Activated CD4-positive, alpha-beta T cell treated with anti-CD3 and anti-CD28 coated beads for 36 hours (primary cell): ENCODE measurements at regions of chr3 and their contacts with region 1.

Region 1: DNA sequence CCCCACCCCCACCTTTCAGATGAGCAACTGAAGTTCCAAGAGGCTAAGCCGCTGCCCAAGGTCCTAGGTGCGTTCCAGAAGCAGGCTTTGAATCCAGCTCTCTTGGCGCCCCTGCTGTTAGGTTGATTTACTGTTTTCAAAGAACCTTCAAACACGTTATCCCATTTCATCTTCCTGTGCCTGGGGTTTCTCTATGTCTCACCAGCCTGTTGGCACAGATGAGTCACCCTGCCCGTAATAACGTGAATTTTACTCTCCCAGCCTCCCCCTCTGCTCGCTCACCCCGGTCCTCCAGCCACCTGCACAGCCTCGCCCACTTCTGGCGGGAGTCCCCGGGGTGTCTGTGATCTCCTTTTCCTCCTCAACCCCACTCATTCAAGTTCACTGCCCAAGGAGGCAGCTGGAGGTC is 13.0 kb upstream of the TSEN2 start:
- DNase-seq: peak; percentile 91
- ATAC-seq: peak; percentile 96
- H3K4me3 Mint-ChIP-seq: peak overlapping the region; percentile 12
- H3K27ac Mint-ChIP-seq: peak overlapping the region; percentile 81
- H3K4me1 Mint-ChIP-seq: peaks cover 36% of the 10 kb centered on the region
- H3K27me3 Mint-ChIP-seq: no peaks in the 10 kb centered on the region

Region 2: GRCh38 chr3:12135029-12135657 is 336.1 kb before region 1 on chr3:
- CTCF ChIA-PET with region 1: interaction called, 141 read pairs
- POLR2A ChIA-PET with region 1: no interaction called
- intact Hi-C with region 1: no loop called
- DNase-seq: peak; percentile 85
- ATAC-seq: peak; percentile 91
- H3K4me3 Mint-ChIP-seq: no peak overlapping the region
- H3K27ac Mint-ChIP-seq: no peak overlapping the region
- H3K4me1 Mint-ChIP-seq: no peaks in the 10 kb centered on the region
- H3K27me3 Mint-ChIP-seq: peaks cover 14% of the 10 kb centered on the region

Region 3: DNA sequence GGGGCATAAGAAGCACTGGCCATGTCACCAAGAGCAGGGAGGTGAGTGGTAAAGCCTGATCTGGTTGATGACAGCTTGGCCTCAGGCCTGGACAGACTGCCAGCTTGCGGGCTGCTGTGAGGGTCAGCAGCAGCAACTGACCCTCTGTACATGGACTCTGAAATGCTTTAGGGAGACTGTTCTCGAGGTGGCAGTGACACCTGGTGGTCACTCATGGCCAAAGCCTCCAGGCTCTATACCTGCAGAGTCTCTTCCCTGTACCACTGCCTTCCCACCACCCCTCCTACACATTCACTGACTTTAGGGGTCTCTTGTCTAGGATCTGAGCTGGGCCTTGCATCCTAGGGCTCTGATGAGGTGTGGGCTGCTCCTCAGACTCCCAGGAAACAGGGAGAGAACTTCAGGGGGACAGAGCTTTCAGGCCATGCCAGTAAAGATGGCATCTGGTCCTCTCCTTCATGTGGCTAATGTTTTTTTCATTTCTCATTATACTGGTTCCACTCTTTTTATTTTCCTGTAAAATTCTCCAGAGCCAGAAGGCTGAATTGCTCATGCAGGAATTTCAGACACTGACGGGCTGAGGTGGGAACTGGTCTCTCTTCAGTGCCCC is 295.3 kb before region 1 on chr3:
- CTCF ChIA-PET with region 1: interaction called, 5 read pairs
- POLR2A ChIA-PET with region 1: interaction called, 4 read pairs
- intact Hi-C with region 1: loop called in 1 of 2 experiments (anchors 1 kb)
- DNase-seq: peak; percentile 69
- ATAC-seq: peak; percentile 18
- H3K4me3 Mint-ChIP-seq: no peak overlapping the region
- H3K27ac Mint-ChIP-seq: no peak overlapping the region
- H3K4me1 Mint-ChIP-seq: peaks cover 17% of the 10 kb centered on the region
- H3K27me3 Mint-ChIP-seq: peaks cover 5% of the 10 kb centered on the region

Region 4: GRCh38 chr3:12187448-12188327 is 283.6 kb before region 1 on chr3:
- CTCF ChIA-PET with region 1: interaction called, 3 read pairs
- POLR2A ChIA-PET with region 1: interaction called, 3 read pairs
- intact Hi-C with region 1: loop called in 1 of 2 experiments (anchors 2 kb)
- DNase-seq: peak; percentile 90
- ATAC-seq: peak; percentile 92
- H3K4me3 Mint-ChIP-seq: peak overlapping the region; percentile 56
- H3K27ac Mint-ChIP-seq: peak overlapping the region; percentile 94
- H3K4me1 Mint-ChIP-seq: peaks cover 52% of the 10 kb centered on the region
- H3K27me3 Mint-ChIP-seq: peaks cover 5% of the 10 kb centered on the region

Region 5: GRCh38 chr3:12349895-12350813 is 121.1 kb before region 1 on chr3:
- CTCF ChIA-PET with region 1: no interaction called
- POLR2A ChIA-PET with region 1: no interaction called
- intact Hi-C with region 1: loop called in 1 of 2 experiments (anchors 1 kb)
- DNase-seq: no peak
- ATAC-seq: no peak
- H3K4me3 Mint-ChIP-seq: no peak overlapping the region
- H3K27ac Mint-ChIP-seq: no peak overlapping the region
- H3K4me1 Mint-ChIP-seq: peaks cover 11% of the 10 kb centered on the region
- H3K27me3 Mint-ChIP-seq: peaks cover 17% of the 10 kb centered on the region

Region 6: GRCh38 chr3:12395349-12396012 is 75.8 kb before region 1 on chr3:
- CTCF ChIA-PET with region 1: interaction called, 4 read pairs
- POLR2A ChIA-PET with region 1: interaction called, 3 read pairs
- intact Hi-C with region 1: loop called (anchors 1 kb)
- DNase-seq: peak; percentile 43
- ATAC-seq: peak; percentile 96
- H3K4me3 Mint-ChIP-seq: peak overlapping the region; percentile 23
- H3K27ac Mint-ChIP-seq: peak overlapping the region; percentile 34
- H3K4me1 Mint-ChIP-seq: peaks cover 24% of the 10 kb centered on the region
- H3K27me3 Mint-ChIP-seq: peaks cover 25% of the 10 kb centered on the region

Region 7: GRCh38 chr3:12423918-12424630 is 47.2 kb before region 1 on chr3:
- CTCF ChIA-PET with region 1: interaction called, 5 read pairs
- POLR2A ChIA-PET with region 1: no interaction called
- intact Hi-C with region 1: loop called in 1 of 2 experiments (anchors 5 kb)
- DNase-seq: peak; percentile 58
- ATAC-seq: peak; percentile 81
- H3K4me3 Mint-ChIP-seq: no peak overlapping the region
- H3K27ac Mint-ChIP-seq: peak overlapping the region; percentile 17
- H3K4me1 Mint-ChIP-seq: peaks cover 21% of the 10 kb centered on the region
- H3K27me3 Mint-ChIP-seq: no peaks in the 10 kb centered on the region